ENCODE measurements at regions of chr11 and their contacts with region 1.

Region 1: DNA sequence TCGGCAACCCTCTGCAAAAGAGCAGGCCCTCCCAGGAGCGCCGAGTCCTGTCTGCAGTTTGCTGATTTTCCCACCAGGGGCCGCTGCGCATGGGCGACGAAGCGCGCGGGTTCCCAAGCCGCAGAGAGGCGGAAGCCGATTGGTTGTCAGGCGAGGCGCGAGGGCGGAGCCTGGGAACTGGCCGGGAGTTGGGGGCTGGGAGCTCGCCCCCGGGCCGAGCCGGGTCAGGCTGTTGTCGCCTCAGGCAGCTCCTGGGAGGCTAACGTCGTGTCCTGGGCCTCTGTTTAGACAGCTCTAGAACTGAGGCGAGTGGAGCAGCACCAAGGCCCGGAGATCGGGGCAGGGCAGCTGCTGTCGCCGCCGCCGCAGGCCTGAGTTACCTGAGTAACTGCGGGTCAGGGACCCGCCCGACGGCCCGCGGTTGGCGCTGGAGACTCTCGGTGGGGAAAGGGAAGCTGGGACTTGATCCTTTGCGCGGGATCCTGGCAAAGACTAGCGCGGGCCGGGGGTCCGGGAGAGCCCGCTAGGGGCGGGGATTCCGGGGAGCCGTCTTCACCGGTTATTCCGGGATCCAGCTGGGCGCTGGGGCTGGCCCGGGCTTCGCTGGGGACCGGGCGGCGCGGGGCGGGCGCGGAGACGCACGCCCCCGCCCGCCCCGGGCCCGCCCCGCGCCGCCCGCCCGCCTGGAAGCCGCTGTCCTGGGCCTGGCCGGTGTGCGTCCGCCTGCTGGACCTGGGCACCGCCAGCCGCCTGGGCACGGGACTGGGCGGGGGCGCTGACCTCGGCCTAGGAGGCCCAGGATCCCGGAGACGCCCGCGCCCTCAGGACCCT is at the start of gene STIM1:
- DNase-seq: peak; percentile 97
- ATAC-seq: peak; percentile 93
- total RNA-seq, gene STIM1: 28.9 TPM

Region 2: DNA sequence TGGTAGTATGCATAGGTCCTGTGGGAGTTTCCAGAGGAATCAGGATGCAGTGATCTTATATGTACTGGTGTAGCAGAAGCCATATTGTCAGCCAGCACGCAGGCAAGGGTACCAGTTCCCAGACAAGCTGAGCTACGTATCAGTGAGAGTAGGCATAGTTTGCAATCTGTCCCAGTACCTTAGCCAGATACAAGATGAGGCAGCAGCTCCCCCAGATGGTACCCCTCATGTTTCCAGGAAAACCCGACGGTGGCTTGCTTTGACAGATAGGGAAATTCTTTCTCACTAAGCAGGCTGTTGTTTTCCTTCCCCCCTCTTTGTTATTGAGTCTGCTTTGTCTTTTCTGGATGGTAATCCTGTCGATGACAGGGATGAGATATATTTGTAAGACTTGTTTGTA is 129.7 kb after region 1 on chr11:
- intact Hi-C with region 1: loop called (anchors 5 kb)
- DNase-seq: no peak
- ATAC-seq: no peak

Region 3: DNA sequence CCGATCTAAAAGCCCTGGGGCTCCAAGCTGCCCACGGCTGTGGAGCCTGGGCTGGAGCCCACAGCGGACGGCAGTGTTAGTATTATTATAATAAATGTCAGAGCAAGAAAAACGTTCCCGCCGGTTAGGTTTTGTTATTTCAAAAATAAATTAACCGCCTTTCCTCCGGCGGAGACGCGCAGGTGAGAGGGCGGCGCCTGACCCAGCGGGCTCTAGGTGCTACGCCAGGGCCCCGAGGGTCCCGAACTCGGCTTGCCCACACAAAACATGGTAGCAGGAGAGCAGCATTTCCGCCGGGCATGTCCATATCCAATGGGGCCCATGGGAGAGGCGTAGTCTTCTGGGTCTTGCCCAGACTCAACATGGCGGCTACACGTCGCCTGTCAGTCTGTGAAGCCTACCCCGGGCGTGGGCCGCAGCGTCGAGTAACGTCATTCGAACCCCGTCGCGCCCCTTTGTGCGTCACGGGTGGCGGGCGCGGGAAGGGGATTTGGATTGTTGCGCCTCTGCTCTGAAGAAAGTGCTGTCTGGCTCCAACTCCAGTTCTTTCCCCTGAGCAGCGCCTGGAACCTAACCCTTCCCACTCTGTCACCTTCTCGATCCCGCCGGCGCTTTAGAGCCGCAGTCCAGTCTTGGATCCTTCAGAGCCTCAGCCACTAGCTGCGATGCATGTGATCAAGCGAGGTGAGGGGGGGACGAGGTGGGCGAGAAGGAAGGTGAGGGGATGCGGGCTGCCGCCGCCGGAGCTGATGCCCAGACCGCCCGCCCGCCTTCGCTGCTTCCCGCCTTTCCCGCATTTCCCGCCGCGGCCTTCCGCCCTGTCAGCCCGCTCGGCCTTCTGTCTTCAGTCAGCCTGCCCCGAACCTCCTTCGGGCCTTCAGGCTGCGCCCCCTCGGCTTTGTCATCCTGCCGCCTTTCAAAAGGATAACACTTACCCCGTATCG is 239.4 kb after region 1 on chr11 and contains the start of gene RRM1:
- intact Hi-C with region 1: loop called (anchors 1 kb)
- DNase-seq: peak; percentile 95
- ATAC-seq: peak; percentile 98
- total RNA-seq, gene RRM1: 25.3 TPM